Ovary (tissue), 10 donors: ENCODE measurements at regions of chr7 and their contacts with region 1.

Region 1: GRCh38 chr7:25259587-25260243 is 31.4 kb upstream of the NPVF start:
- DNase-seq: peak; percentile 51 to 77 (median 53)
- H3K4me3 ChIP-seq: no peak overlapping the region
- H3K27ac ChIP-seq: no peak overlapping the region
- H3K4me1 ChIP-seq: no peaks in the 10 kb centered on the region
- H3K27me3 ChIP-seq: no peaks in the 10 kb centered on the region
- CTCF ChIP-seq: peak; percentile 70 to 80 (median 71)
- EP300 ChIP-seq: no peak
- POLR2A ChIP-seq: no peak

Region 2: GRCh38 chr7:25359471-25360059 is 99.8 kb after region 1 on chr7:
- intact Hi-C with region 1: no loop called
- DNase-seq: no peak
- H3K4me3 ChIP-seq: no peak overlapping the region
- H3K27ac ChIP-seq: no peak overlapping the region
- H3K4me1 ChIP-seq: no peaks in the 10 kb centered on the region
- H3K27me3 ChIP-seq: no peaks in the 10 kb centered on the region
- CTCF ChIP-seq: no peak
- EP300 ChIP-seq: no peak
- POLR2A ChIP-seq: no peak

Region 3: DNA sequence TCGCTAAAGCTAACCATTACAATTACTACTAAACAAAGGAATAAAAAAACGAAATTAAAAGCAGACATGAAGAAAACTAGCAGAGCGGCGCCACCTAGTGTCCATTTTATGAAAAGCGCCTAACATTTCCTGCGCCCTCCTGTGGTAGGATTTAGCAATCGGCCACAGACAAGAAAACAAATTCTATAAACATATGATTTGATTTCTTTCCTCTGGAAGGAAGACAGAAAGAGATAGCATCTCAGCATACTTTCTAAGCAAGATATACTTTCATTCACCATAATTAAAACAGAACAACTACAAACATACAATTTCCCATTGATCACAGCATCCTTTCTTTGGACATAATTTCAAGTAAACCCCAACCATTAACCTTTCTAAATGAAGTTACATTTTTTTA is 306.2 kb after region 1 on chr7:
- intact Hi-C with region 1: loop called (anchors 5 to 10 kb)
- DNase-seq: peak; percentile 51 to 80 (median 76)
- H3K4me3 ChIP-seq: no peak overlapping the region
- H3K27ac ChIP-seq: no peak overlapping the region
- H3K4me1 ChIP-seq: peaks cover 3% of the 10 kb centered on the region
- H3K27me3 ChIP-seq: no peaks in the 10 kb centered on the region
- CTCF ChIP-seq: peak; percentile 98 to 100 (median 98)
- EP300 ChIP-seq: no peak
- POLR2A ChIP-seq: no peak